HepG2 (cell line): ENCODE measurements at regions of chr2 and their contacts with region 1.

Region 1: DNA sequence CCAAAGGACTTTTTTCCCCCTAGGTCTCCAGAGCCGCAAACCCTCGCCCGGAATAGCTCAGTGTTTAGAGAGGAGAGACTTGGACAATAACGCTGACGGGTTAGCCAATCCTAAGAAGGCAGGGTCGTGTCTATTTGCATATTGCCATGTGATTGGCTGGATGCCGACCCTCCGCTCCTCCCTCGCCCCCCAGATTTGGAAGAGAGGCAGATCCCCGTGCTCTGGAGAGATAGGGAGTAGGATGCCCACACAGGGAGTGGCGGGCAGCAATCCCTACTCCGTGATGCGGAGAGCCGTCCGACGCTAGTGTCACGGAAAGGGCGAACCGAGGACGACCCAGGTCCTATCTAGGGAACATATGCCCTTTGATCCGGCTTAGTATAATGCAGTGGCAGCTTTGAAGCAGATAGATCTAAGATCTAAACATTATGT is 1.4 kb downstream of the WNT6 start:
- DNase-seq: peak; percentile 78
- ATAC-seq: peak; percentile 83
- H3K4me3 ChIP-seq: peak overlapping the region in 1 of 3 experiments; percentile 67; a peak in 1 of 6 replicates
- H3K27ac ChIP-seq: no peak overlapping the region
- H3K4me1 ChIP-seq: peaks cover 27% of the 10 kb centered on the region
- H3K27me3 ChIP-seq: peaks cover 16 to 80% of the 10 kb centered on the region in 2 experiments
- CTCF ChIP-seq: no peak
- EP300 ChIP-seq: no peak
- POLR2A ChIP-seq: no peak
- RAD21 ChIP-seq: no peak

Region 2: GRCh38 chr2:217382794-217383193 is 1478.2 kb before region 1 on chr2:
- CTCF ChIA-PET with region 1: no interaction called
- POLR2A ChIA-PET with region 1: no interaction called
- in situ Hi-C with region 1: no loop called
- intact Hi-C with region 1: no loop called
- DNase-seq: no peak
- ATAC-seq: no peak
- H3K4me3 ChIP-seq: no peak overlapping the region
- H3K27ac ChIP-seq: no peak overlapping the region
- H3K4me1 ChIP-seq: no peaks in the 10 kb centered on the region
- H3K27me3 ChIP-seq: no peaks in the 10 kb centered on the region; a peak in 1 of 5 replicates
- CTCF ChIP-seq: no peak
- EP300 ChIP-seq: no peak
- POLR2A ChIP-seq: no peak
- RAD21 ChIP-seq: no peak

Region 3: GRCh38 chr2:218959141-218959731 is 98.3 kb after region 1 on chr2 and contains the start of gene CDK5R2:
- CTCF ChIA-PET with region 1: no interaction called
- POLR2A ChIA-PET with region 1: no interaction called
- in situ Hi-C with region 1: no loop called
- intact Hi-C with region 1: loop called (anchors 10 kb)
- DNase-seq: peak; percentile 69
- ATAC-seq: peak; percentile 88
- H3K4me3 ChIP-seq: peak within 1 kb of the TSS; percentile 39 to 67 (median 43); a peak in 5 of 6 replicates
- H3K27ac ChIP-seq: no peak within 1 kb of the TSS
- H3K4me1 ChIP-seq: peaks cover 33% of the 10 kb centered on the region
- H3K27me3 ChIP-seq: peaks cover 11 to 79% of the 10 kb centered on the region in 2 experiments
- CTCF ChIP-seq: no peak
- EP300 ChIP-seq: no peak
- POLR2A ChIP-seq: no peak
- RAD21 ChIP-seq: no peak
- total RNA-seq, gene CDK5R2: not detected in 2 replicates

Region 4: DNA sequence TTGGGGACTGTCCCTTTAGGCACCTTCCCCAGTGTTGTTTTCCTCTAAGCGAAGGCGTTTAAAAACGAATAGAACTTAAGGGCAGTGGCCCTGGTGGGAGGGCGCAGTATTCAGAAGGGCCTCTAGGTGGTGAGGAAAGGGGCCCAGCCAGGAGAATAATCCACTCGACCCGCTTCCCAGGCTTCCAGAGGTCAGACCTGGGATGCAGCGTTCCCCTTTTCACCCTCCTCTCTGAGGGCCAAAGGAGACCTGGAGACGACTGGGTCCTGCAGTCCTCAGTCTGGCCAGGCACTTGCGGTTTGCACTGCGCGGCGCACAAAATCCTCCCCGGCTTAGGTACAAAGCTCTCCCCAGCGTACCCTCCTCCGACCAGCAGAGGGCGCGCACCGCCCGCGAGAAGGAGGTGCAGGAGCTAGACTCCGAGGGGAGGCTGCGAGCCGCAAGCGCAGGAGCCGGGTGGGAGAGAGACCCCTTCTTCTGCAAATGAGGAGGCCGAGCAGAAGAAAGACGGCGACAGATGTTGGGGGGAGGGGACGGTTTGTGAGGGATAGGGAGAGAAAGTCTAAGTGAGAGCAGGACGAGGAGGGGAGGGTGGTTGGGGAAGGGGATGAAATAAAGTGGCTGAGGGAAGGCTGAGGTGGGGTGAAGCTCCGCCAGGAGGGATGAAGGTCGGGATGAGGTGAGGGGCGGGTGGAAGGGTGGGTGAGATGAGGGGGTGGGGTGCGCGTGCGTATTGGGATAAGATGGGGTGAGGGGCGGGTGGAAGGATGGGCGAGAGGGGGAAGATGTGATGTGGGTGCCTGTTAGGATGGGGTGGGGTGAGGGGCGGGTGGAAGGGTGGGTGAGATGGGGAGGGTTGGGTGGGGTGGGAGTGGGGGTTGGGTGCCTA is 119.1 kb after region 1 on chr2:
- CTCF ChIA-PET with region 1: no interaction called
- POLR2A ChIA-PET with region 1: no interaction called
- in situ Hi-C with region 1: no loop called
- intact Hi-C with region 1: loop called (anchors 10 kb)
- DNase-seq: peak; percentile 66
- ATAC-seq: peak; percentile 93
- H3K4me3 ChIP-seq: peak overlapping the region; percentile 34 to 64 (median 42); a peak in 5 of 6 replicates
- H3K27ac ChIP-seq: no peak overlapping the region
- H3K4me1 ChIP-seq: peaks cover 11% of the 10 kb centered on the region; the same call in 1 of the 2 replicates
- H3K27me3 ChIP-seq: peaks cover 31 to 64% of the 10 kb centered on the region in 2 experiments
- CTCF ChIP-seq: peak; percentile 99
- EP300 ChIP-seq: no peak
- POLR2A ChIP-seq: no peak
- RAD21 ChIP-seq: peak; percentile 92